ENCODE measurements at regions of chr18 and their contacts with region 1.

Region 1: GRCh38 chr18:62249478-62250097 is 62.5 kb downstream of the RELCH start:
- DNase-seq: peak; percentile 74
- H3K4me3 Mint-ChIP-seq: no peak overlapping the region
- H3K27ac Mint-ChIP-seq: no peak overlapping the region
- H3K4me1 Mint-ChIP-seq: no peaks in the 10 kb centered on the region
- H3K27me3 Mint-ChIP-seq: no peaks in the 10 kb centered on the region

Region 2: GRCh38 chr18:62198259-62198658 is 51.3 kb before region 1 on chr18:
- CTCF ChIA-PET with region 1: interaction called, 12 read pairs
- POLR2A ChIA-PET with region 1: no interaction called
- DNase-seq: no peak
- H3K4me3 Mint-ChIP-seq: no peak overlapping the region
- H3K27ac Mint-ChIP-seq: no peak overlapping the region
- H3K4me1 Mint-ChIP-seq: peaks cover 30% of the 10 kb centered on the region
- H3K27me3 Mint-ChIP-seq: no peaks in the 10 kb centered on the region

Region 3: GRCh38 chr18:62224229-62224628 is 25.4 kb before region 1 on chr18:
- CTCF ChIA-PET with region 1: interaction called, 11 read pairs
- POLR2A ChIA-PET with region 1: no interaction called
- DNase-seq: no peak
- H3K4me3 Mint-ChIP-seq: no peak overlapping the region
- H3K27ac Mint-ChIP-seq: no peak overlapping the region
- H3K4me1 Mint-ChIP-seq: no peaks in the 10 kb centered on the region
- H3K27me3 Mint-ChIP-seq: no peaks in the 10 kb centered on the region